ENCODE measurements at regions of chr3 and their contacts with region 1.

Region 1: GRCh38 chr3:124688581-124689454 is 41.4 kb upstream of the UMPS start:
- DNase-seq: peak; percentile 84
- ATAC-seq: peak; percentile 87
- H3K4me3 Mint-ChIP-seq: no peak overlapping the region
- H3K27ac Mint-ChIP-seq: no peak overlapping the region
- H3K4me1 Mint-ChIP-seq: peaks cover 5% of the 10 kb centered on the region
- H3K27me3 Mint-ChIP-seq: peaks cover 10% of the 10 kb centered on the region

Region 2: GRCh38 chr3:124552239-124552638 is 136.6 kb before region 1 on chr3:
- CTCF ChIA-PET with region 1: interaction called, 10 read pairs
- POLR2A ChIA-PET with region 1: no interaction called
- intact Hi-C with region 1: no loop called
- DNase-seq: no peak
- ATAC-seq: no peak
- H3K4me3 Mint-ChIP-seq: no peak overlapping the region
- H3K27ac Mint-ChIP-seq: no peak overlapping the region
- H3K4me1 Mint-ChIP-seq: no peaks in the 10 kb centered on the region
- H3K27me3 Mint-ChIP-seq: peaks cover 31% of the 10 kb centered on the region

Region 3: GRCh38 chr3:124559881-124560574 is 128.8 kb before region 1 on chr3:
- CTCF ChIA-PET with region 1: interaction called, 63 read pairs
- POLR2A ChIA-PET with region 1: no interaction called
- intact Hi-C with region 1: loop called (anchors 1 kb)
- DNase-seq: peak; percentile 76
- ATAC-seq: peak; percentile 47
- H3K4me3 Mint-ChIP-seq: no peak overlapping the region
- H3K27ac Mint-ChIP-seq: no peak overlapping the region
- H3K4me1 Mint-ChIP-seq: no peaks in the 10 kb centered on the region
- H3K27me3 Mint-ChIP-seq: peaks cover 17% of the 10 kb centered on the region

Region 4: DNA sequence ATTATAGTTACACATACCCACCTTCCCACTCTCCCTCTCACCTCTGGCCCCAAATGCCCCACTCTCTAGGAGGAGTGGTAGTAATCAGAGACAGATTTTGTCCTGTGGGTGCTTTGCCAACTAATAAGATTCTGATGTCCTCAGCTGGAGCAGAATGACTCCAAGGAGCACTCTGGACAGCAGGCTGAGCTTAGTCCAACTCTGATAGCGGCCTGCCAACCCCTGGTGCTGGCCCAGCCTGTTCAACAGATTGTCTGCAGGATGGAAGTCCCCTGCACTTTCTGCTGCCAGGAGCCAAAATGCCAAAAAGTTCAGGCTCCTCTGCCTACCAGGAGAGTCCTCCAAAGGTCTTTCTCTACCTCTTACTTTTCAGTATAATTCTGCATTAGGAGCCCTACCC is 119.1 kb before region 1 on chr3:
- CTCF ChIA-PET with region 1: interaction called, 45 read pairs
- POLR2A ChIA-PET with region 1: no interaction called
- intact Hi-C with region 1: loop called (anchors 1 kb)
- DNase-seq: no peak
- ATAC-seq: no peak
- H3K4me3 Mint-ChIP-seq: no peak overlapping the region
- H3K27ac Mint-ChIP-seq: no peak overlapping the region
- H3K4me1 Mint-ChIP-seq: no peaks in the 10 kb centered on the region
- H3K27me3 Mint-ChIP-seq: no peaks in the 10 kb centered on the region

Region 5: GRCh38 chr3:124620600-124621063 is 68.2 kb before region 1 on chr3:
- CTCF ChIA-PET with region 1: interaction called, 3 read pairs
- POLR2A ChIA-PET with region 1: no interaction called
- intact Hi-C with region 1: loop called (anchors 5 kb)
- DNase-seq: peak; percentile 40
- ATAC-seq: peak; percentile 91
- H3K4me3 Mint-ChIP-seq: no peak overlapping the region
- H3K27ac Mint-ChIP-seq: peak overlapping the region; percentile 40
- H3K4me1 Mint-ChIP-seq: peaks cover 20% of the 10 kb centered on the region
- H3K27me3 Mint-ChIP-seq: peaks cover 1% of the 10 kb centered on the region

Region 6: DNA sequence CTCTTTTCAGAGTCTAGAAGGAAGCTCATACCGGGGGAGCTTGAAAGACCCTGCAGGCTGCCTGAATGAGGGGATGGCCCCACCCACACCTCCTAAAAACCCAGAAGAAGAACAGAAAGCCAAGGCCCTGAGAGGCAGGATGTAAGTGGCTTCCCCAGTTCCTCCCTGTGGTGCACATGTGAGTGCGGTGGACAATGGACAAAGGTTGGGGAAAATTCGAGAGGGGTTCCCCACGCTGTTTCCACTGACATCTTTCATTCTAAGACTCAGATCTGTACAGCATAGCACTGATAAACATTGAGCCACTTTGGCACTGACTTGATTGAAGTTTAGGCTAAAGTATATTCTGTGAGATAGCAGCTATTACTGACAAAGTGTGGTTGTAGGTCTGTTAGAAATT is 38.0 kb before region 1 on chr3:
- CTCF ChIA-PET with region 1: interaction called, 10 read pairs
- POLR2A ChIA-PET with region 1: no interaction called
- intact Hi-C with region 1: no loop called
- DNase-seq: peak; percentile 9
- ATAC-seq: peak; percentile 26
- H3K4me3 Mint-ChIP-seq: no peak overlapping the region
- H3K27ac Mint-ChIP-seq: no peak overlapping the region
- H3K4me1 Mint-ChIP-seq: peaks cover 2% of the 10 kb centered on the region
- H3K27me3 Mint-ChIP-seq: peaks cover 12% of the 10 kb centered on the region

Measured in activated CD4-positive, alpha-beta T cell treated with anti-CD3 and anti-CD28 coated beads for 36 hours (primary cell).